A549 (cell line): ENCODE measurements at regions of chr7 and their contacts with region 1.

Region 1: GRCh38 chr7:112779667-112780066 is 10.5 kb downstream of the TMEM168 start:
- DNase-seq: no peak
- ATAC-seq: no peak
- H3K4me3 ChIP-seq: no peak overlapping the region
- H3K27ac ChIP-seq: no peak overlapping the region
- H3K4me1 ChIP-seq: peaks cover 7% of the 10 kb centered on the region; the same call in 1 of the 3 replicates
- CTCF ChIP-seq: no peak
- EP300 ChIP-seq: no peak
- POLR2A ChIP-seq: no peak
- RAD21 ChIP-seq: no peak

Region 2: DNA sequence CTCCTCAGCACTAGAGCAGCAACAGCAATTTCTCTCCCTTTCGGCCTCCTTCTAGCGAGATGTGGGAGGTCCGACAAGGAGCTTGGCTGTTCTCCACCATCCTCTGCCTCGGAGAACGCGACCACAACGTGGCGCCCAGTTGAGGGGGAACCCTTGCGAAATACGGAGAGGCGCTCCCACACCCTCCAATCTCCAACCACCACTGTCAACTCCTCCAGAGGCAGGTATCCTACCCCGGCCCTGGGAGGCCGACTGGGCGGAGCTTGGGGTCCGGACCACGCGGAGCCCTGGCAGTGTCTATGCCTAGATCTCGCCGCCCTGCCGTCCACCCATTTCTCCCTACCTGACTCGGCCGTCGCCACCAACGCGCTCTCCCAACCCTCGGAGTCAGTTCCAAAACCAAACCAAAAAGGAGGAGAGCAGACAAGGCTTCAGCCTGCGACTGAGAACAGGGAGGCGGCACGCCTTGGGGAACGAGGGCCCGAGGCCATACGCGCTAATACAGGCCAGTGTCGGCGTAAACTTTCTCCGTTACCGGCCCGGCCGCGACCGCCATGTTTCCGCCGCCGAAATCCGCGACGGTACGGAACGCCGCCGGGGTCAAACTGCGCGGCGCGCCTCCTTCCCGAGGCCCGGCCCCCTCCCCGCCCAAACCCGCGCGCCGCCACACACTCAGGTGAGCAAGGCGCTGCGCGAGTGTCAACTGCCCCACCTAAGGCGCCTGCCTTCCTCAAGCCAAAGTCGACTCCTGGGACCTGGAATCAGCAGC is 10.3 kb after region 1 on chr7 and contains the start of gene TMEM168:
- CTCF ChIA-PET with region 1: no interaction called
- POLR2A ChIA-PET with region 1: interaction called, 16 read pairs
- DNase-seq: peak; percentile 80 to 88
- ATAC-seq: peak; percentile 95 to 98
- H3K4me3 ChIP-seq: peak within 1 kb of the TSS; percentile 74
- H3K27ac ChIP-seq: peak within 1 kb of the TSS; percentile 90 to 96
- H3K4me1 ChIP-seq: peaks cover 12% of the 10 kb centered on the region; the same call in 2 of the 3 replicates
- CTCF ChIP-seq: no peak
- EP300 ChIP-seq: no peak
- POLR2A ChIP-seq: peak; percentile 74
- RAD21 ChIP-seq: no peak
- polyA plus RNA-seq, gene TMEM168: 40.0 and 41.8 TPM in 2 replicates

Region 3: GRCh38 chr7:112821345-112821744 is 41.7 kb after region 1 on chr7:
- CTCF ChIA-PET with region 1: no interaction called
- POLR2A ChIA-PET with region 1: no interaction called
- DNase-seq: no peak
- ATAC-seq: no peak
- H3K4me3 ChIP-seq: no peak overlapping the region
- H3K27ac ChIP-seq: no peak overlapping the region
- H3K4me1 ChIP-seq: no peaks in the 10 kb centered on the region
- CTCF ChIP-seq: no peak
- EP300 ChIP-seq: no peak
- POLR2A ChIP-seq: no peak
- RAD21 ChIP-seq: no peak